ENCODE measurements at regions of chr2 and their contacts with region 1.

Region 1: DNA sequence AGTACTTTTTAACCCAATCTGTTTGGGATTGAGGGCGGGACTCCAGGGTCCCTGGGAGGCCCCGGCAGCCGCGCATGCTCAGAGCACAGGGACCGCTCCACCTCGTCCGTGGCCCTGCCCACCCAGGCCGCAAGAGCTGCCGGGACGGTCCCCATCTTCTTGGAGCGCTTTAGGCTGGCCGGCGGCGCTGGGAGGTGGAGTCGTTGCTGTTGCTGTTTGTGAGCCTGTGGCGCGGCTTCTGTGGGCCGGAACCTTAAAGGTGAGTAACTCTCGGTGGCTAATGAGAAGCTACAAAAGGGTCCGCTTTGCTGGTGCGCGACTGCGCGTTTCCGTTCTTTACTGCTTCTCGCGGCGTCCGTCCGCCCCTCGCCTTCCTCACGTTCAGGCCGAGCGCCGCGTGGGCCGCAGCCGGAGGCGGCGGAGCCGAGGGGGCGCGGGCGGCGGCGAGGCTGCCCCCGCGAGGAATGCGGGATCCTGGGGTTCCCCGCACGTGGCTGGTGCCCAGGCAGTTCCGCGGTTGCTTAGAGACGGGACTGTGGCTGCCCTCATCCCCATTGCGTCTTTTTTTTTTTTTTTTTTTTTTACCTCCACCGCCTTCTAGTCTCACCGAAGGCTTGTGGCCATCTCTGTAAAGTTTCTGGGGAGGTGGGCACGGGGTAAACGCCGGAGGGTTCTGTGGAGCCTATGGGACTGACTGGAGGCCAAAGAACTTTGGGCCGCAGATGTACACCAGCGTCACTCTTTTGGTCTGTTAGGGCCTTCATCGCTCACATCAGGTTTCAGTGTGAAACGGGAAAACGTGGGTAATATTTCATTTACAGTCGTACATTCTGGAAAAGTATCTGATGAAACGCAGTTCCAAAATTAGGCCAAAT is at the start of gene SSB:
- DNase-seq: peak; percentile 98
- H3K4me3 Mint-ChIP-seq: peak within 1 kb of the TSS; percentile 87
- H3K27ac Mint-ChIP-seq: peak within 1 kb of the TSS; percentile 90
- H3K4me1 Mint-ChIP-seq: peaks cover 25% of the 10 kb centered on the region
- H3K27me3 Mint-ChIP-seq: peaks cover 2% of the 10 kb centered on the region
- total RNA-seq, gene SSB: 112 to 120 TPM

Region 2: DNA sequence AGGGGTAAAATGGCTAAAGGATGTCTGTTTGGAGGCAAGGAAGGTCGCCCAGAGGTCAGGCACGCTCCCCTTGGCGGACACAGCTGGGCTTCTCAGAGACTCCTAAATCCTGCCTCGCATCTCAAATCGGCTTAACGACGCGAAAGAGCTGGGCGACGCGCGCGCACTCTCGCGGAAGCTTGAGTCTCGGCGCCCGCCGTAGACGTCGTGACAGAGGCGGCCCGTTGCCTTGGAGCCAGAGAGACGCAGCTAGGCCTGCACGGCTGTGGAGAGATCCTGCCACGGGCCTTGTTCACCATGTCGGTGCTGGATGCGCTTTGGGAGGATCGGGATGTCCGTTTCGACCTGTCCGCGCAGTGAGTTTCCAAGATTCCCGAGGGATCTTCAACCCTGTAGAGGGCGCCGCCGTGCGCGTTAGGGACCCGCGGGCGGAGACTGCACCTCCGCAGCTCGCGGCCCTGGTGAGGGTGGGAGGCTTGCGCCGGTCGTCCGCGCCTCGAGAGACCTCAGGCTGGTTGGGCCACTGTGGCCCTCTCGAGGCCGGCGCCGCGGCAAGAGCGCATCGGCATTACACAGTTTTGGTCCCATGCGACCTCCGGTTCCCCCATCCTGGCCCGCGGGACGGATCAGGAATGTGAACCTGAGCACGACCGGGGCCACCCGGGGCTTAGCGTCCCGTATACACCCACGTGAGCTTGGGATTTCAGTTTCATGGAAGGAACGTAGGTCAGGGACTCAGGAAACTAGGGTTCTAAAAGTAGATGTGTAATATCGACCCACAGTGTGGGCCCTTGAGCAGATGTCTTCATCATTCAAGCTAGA is 319.5 kb before region 1 on chr2 and contains the start of gene BBS5:
- CTCF ChIA-PET with region 1: no interaction called
- POLR2A ChIA-PET with region 1: no interaction called
- intact Hi-C with region 1: loop called (anchors 1 kb)
- DNase-seq: peak; percentile 87
- H3K4me3 Mint-ChIP-seq: peak within 1 kb of the TSS; percentile 87
- H3K27ac Mint-ChIP-seq: no peak within 1 kb of the TSS
- H3K4me1 Mint-ChIP-seq: peaks cover 13% of the 10 kb centered on the region
- H3K27me3 Mint-ChIP-seq: no peaks in the 10 kb centered on the region
- total RNA-seq, gene BBS5: 2.4 to 3.4 TPM

Region 3: GRCh38 chr2:169584005-169584877 is 214.7 kb before region 1 on chr2 and contains the start of gene PPIG:
- CTCF ChIA-PET with region 1: no interaction called
- POLR2A ChIA-PET with region 1: interaction called, 5 read pairs
- intact Hi-C with region 1: loop called (anchors 1 kb)
- DNase-seq: peak; percentile 93
- H3K4me3 Mint-ChIP-seq: peak within 1 kb of the TSS; percentile 99
- H3K27ac Mint-ChIP-seq: peak within 1 kb of the TSS; percentile 98
- H3K4me1 Mint-ChIP-seq: peaks cover 27% of the 10 kb centered on the region
- H3K27me3 Mint-ChIP-seq: no peaks in the 10 kb centered on the region
- total RNA-seq, gene PPIG: 52.3 to 55.3 TPM

Region 4: GRCh38 chr2:169732583-169733358 is 66.2 kb before region 1 on chr2:
- CTCF ChIA-PET with region 1: no interaction called
- POLR2A ChIA-PET with region 1: no interaction called
- intact Hi-C with region 1: loop called (anchors 2 kb)
- DNase-seq: no peak
- H3K4me3 Mint-ChIP-seq: no peak overlapping the region
- H3K27ac Mint-ChIP-seq: no peak overlapping the region
- H3K4me1 Mint-ChIP-seq: peaks cover 3% of the 10 kb centered on the region
- H3K27me3 Mint-ChIP-seq: peaks cover 31% of the 10 kb centered on the region

Region 5: GRCh38 chr2:169824373-169825333 is 25.7 kb after region 1 on chr2 and contains the start of gene METTL5:
- CTCF ChIA-PET with region 1: interaction called, 7 read pairs
- POLR2A ChIA-PET with region 1: interaction called, 9 read pairs
- intact Hi-C with region 1: loop called (anchors 1 kb)
- DNase-seq: peak; percentile 87
- H3K4me3 Mint-ChIP-seq: peak within 1 kb of the TSS; percentile 84
- H3K27ac Mint-ChIP-seq: peak within 1 kb of the TSS; percentile 78
- H3K4me1 Mint-ChIP-seq: peaks cover 55% of the 10 kb centered on the region
- H3K27me3 Mint-ChIP-seq: no peaks in the 10 kb centered on the region
- total RNA-seq, gene METTL5: 109 to 110 TPM

Measured in activated CD4-positive, alpha-beta memory T cell treated with anti-CD3 and anti-CD28 coated beads for 36 hours (primary cell).